ENCODE measurements at regions of chr6 and their contacts with region 1.

Region 1: GRCh38 chr6:82924799-82925535 is 140.7 kb downstream of the UBE3D start:
- DNase-seq: no peak
- ATAC-seq: no peak

Region 2: GRCh38 chr6:82185948-82186535 is 738.9 kb before region 1 on chr6:
- intact Hi-C with region 1: loop called (anchors 5 kb)
- DNase-seq: no peak
- ATAC-seq: no peak

Region 3: DNA sequence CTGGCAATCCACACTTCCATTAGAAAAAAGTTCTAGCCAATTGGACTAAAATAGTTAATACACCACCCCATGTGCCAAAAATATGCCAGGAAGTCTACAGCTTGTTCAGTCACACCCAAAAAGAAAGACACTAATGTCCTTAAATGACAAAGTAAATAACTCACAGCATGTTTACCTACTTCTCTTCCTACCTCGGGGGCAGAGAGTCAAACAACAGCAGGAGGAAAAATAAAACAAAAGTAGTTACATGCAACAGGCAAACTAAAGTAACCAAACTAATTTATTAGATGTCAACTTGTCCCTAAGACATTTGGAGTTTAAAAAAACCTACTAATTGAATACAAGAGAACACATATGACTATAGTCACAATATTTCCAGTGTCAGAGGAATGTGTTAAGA is 83.7 kb after region 1 on chr6:
- intact Hi-C with region 1: no loop called
- DNase-seq: no peak
- ATAC-seq: no peak